PC-3 (cell line): ENCODE measurements at regions of chr3 and their contacts with region 1.

Region 1: DNA sequence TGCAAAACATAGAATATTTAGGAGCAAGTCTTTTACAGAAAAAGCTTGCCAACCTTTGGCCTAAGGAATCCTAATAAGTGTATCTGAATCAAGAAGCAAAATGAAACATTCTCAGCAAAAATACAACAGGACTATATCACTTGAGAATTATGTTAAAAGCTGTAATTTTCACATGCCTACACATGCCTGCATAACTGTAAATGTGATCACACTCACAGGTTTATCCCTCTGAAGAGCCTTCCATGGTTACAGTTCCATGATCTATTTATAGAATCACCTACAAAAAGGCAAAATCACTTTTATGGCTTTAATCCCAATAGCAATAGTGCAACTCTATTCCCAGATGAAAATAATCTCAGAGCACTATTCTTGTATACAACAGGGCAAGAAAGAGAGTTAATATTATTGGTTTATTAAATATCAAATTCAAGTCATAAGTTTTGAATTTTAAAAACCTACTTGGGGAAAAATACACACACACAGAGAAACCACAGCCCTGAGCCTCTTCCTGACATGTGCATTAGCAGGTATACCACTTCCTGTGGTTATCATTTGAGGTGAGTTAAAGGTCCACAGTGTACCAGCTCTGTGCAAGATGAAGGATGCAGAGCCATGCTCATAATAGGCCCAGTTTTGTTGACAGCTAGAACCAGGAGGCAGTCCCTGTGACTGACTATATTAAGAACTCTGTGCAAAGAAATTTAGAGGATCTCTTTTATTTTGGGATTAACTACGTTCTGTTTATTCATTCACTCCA is 252.5 kb upstream of the TGFBR2 start:
- DNase-seq: peak; percentile 65
- ATAC-seq: no peak; the same call in 1 of the 2 replicates
- H3K4me3 ChIP-seq: no peak overlapping the region
- H3K27ac ChIP-seq: peak overlapping the region; percentile 69
- H3K4me1 ChIP-seq: peaks cover 90% of the 10 kb centered on the region
- H3K27me3 ChIP-seq: no peaks in the 10 kb centered on the region
- CTCF ChIP-seq: no peak

Region 2: DNA sequence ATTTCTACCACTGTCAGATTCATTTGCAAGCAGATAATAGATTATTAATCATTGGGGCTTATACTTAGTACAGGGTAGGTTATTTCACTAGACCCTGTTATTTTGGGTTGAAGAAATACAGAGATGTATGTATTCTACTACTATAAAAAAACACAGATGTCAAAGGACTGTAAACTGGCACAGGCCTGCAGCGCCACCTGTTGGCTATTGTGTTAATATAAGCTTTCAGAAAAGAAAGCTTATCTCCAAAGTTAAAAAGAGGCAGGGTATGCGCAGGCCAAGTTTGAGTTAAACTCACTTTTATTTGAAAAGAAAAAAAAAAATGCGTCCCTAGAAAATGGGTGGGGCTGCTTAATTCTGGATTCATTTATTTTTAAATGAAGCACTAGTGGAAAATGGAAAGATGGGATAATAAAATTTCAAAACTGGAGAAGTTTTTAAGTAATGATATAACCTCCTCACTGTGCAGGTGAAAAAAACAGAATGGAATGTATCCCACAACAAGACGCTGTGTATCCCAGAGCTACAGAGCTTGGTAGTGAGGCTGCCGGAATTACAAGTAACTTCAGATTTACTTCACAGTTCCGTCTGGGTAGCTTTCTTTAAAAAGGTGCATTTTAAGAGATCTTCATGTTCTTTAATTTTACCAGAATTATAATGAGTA is 154.7 kb before region 1 on chr3:
- CTCF ChIA-PET with region 1: interaction called, 4 read pairs
- POLR2A ChIA-PET with region 1: no interaction called
- intact Hi-C with region 1: loop called (anchors 5 kb)
- DNase-seq: peak; percentile 77
- ATAC-seq: peak; percentile 59
- H3K4me3 ChIP-seq: no peak overlapping the region
- H3K27ac ChIP-seq: no peak overlapping the region
- H3K4me1 ChIP-seq: no peaks in the 10 kb centered on the region
- H3K27me3 ChIP-seq: no peaks in the 10 kb centered on the region
- CTCF ChIP-seq: peak; percentile 93

Region 3: GRCh38 chr3:30342319-30343060 is 11.4 kb before region 1 on chr3:
- CTCF ChIA-PET with region 1: no interaction called
- POLR2A ChIA-PET with region 1: no interaction called
- intact Hi-C with region 1: loop called (anchors 1 kb)
- DNase-seq: peak; percentile 99
- ATAC-seq: peak; percentile 64
- H3K4me3 ChIP-seq: peak overlapping the region; percentile 28; the same call in 1 of the 2 replicates
- H3K27ac ChIP-seq: peak overlapping the region; percentile 98
- H3K4me1 ChIP-seq: peaks cover 59% of the 10 kb centered on the region
- H3K27me3 ChIP-seq: no peaks in the 10 kb centered on the region
- CTCF ChIP-seq: no peak

Region 4: GRCh38 chr3:30511524-30512278 is 157.8 kb after region 1 on chr3:
- CTCF ChIA-PET with region 1: no interaction called
- POLR2A ChIA-PET with region 1: no interaction called
- intact Hi-C with region 1: loop called (anchors 2 kb)
- DNase-seq: peak; percentile 98
- ATAC-seq: peak; percentile 74
- H3K4me3 ChIP-seq: no peak overlapping the region
- H3K27ac ChIP-seq: peak overlapping the region; percentile 71
- H3K4me1 ChIP-seq: peaks cover 43% of the 10 kb centered on the region
- H3K27me3 ChIP-seq: no peaks in the 10 kb centered on the region
- CTCF ChIP-seq: no peak

Region 5: DNA sequence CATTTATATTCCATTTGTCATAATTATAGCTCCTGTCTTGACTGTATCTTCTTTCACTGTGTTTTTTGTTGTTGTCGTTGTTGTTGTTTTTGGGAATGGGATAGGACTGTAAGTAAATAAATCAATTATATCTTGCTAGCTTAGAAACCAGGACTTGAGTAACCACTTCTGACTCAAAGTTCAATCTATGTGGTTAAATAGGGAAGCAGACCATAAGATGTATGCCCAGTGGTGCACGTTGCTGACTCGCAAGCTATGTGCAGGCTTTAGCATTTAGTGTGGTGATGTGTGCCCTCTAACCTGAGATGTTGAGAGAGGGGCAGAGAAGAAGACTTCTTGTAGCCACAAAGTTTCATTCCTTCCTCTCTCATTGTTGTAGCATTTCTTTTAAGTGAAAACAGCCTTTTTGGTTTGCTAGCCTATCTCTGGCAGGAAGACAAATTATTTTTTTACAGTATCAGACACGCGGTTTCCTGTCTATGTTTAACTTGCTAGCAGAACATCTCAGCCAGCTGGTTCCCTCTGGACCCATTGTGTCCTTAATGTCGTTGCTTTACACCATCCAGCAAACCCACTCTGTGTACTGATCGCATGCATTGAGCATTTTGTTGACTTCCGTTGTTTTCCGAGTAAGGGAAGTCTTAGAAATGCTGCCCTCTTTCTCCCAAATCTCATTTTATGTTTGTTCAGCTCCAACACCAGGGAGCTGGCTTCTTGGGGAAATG is 304.6 kb after region 1 on chr3:
- CTCF ChIA-PET with region 1: no interaction called
- POLR2A ChIA-PET with region 1: no interaction called
- intact Hi-C with region 1: loop called (anchors 1 kb)
- DNase-seq: peak; percentile 83
- ATAC-seq: peak; percentile 58
- H3K4me3 ChIP-seq: peak overlapping the region; percentile 23
- H3K27ac ChIP-seq: peak overlapping the region; percentile 87
- H3K4me1 ChIP-seq: peaks cover 65% of the 10 kb centered on the region
- H3K27me3 ChIP-seq: no peaks in the 10 kb centered on the region
- CTCF ChIP-seq: no peak